HCT116 (cell line): ENCODE measurements at regions of chr18 and their contacts with region 1.

Region 1: GRCh38 chr18:30271716-30272115 is 770.8 kb downstream of the DSC3 start:
- DNase-seq: no peak
- ATAC-seq: no peak
- H3K4me3 ChIP-seq: no peak overlapping the region
- H3K27ac ChIP-seq: no peak overlapping the region
- H3K4me1 ChIP-seq: no peaks in the 10 kb centered on the region
- H3K27me3 ChIP-seq: no peaks in the 10 kb centered on the region
- CTCF ChIP-seq: no peak
- POLR2A ChIP-seq: no peak
- RAD21 ChIP-seq: 0 out of 2 replicates have a peak, but pooled peaks have one; percentile 15

Region 2: DNA sequence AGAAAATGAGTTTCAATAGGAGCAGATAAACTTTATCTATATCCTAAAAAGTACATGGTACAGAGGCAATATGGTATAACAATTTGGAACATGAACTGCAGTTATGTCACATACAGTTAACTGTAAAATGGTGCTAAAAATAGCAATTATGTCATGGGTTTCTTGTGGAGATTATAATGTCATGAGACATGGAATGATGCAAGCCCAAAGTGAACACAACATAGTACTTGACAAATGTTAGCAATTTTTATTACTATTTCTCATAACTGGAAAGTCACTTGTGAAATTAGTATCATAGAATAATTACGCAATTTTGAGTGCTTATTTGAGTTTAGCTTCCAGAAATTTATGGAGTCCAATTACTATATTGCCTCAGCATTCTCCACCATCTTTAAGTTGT is 492.6 kb before region 1 on chr18:
- CTCF ChIA-PET with region 1: no interaction called
- POLR2A ChIA-PET with region 1: no interaction called
- RAD21 ChIA-PET with region 1: no interaction called
- intact Hi-C with region 1: loop called (anchors 10 kb)
- DNase-seq: no peak
- ATAC-seq: no peak
- H3K4me3 ChIP-seq: no peak overlapping the region
- H3K27ac ChIP-seq: no peak overlapping the region
- H3K4me1 ChIP-seq: no peaks in the 10 kb centered on the region
- H3K27me3 ChIP-seq: no peaks in the 10 kb centered on the region
- CTCF ChIP-seq: no peak
- POLR2A ChIP-seq: no peak
- RAD21 ChIP-seq: no peak

Region 3: GRCh38 chr18:29892960-29893558 is 378.7 kb before region 1 on chr18:
- CTCF ChIA-PET with region 1: no interaction called
- POLR2A ChIA-PET with region 1: no interaction called
- RAD21 ChIA-PET with region 1: no interaction called
- intact Hi-C with region 1: no loop called
- DNase-seq: no peak
- ATAC-seq: no peak
- H3K4me3 ChIP-seq: no peak overlapping the region
- H3K27ac ChIP-seq: no peak overlapping the region
- H3K4me1 ChIP-seq: no peaks in the 10 kb centered on the region
- H3K27me3 ChIP-seq: no peaks in the 10 kb centered on the region
- CTCF ChIP-seq: peak; percentile 20 to 64 (median 55); a peak in 3 of 6 replicates
- POLR2A ChIP-seq: no peak
- RAD21 ChIP-seq: peak; percentile 28; the same call in 1 of the 2 replicates